ENCODE measurements at regions of chr1 and their contacts with region 1.

Region 1: DNA sequence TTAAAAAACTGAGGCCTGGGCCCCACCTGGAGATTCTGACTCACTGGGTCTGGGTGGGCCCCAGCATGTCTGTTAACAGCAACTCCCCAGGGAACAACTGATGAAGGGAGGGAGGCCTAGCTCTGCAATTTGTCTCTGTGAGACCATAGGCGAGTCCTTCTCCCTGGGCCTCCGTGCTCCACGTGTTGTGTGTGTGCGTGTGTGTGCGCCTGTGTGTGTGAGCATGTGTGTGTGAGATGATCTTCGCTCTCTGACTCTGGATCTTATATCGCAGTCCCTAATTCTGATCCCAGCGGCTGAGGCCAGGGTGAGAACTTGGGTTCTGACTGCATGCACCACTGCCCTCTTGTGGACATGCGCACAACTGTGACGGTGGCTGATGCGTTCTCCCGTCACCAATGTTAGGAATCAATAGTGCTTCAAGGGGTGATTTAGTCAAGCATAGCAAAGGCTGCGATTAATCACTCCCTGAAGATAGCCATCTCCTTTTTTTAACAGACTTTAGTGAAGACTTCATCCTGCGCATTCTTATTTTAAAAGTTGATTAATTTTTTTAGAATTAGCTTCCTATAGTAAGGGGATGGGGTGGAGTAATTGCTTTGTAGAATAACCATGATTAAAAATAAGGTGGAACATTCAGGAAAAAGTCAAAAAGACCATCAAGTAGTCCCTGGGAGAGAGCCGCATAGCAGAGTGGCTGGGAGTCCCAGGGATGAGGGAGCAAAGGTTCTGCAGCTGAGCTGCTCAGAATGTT is 62.4 kb upstream of the USP24 start:
- DNase-seq: peak; percentile 59
- ATAC-seq: peak; percentile 98
- H3K4me3 ChIP-seq: no peak overlapping the region
- H3K27ac ChIP-seq: no peak overlapping the region
- H3K4me1 ChIP-seq: peaks cover 9% of the 10 kb centered on the region; the same call in 1 of the 2 replicates
- H3K27me3 ChIP-seq: no peaks in the 10 kb centered on the region
- CTCF ChIP-seq: peak; percentile 67 to 84 (median 82)
- EP300 ChIP-seq: no peak
- POLR2A ChIP-seq: no peak
- RAD21 ChIP-seq: peak; percentile 77

Region 2: DNA sequence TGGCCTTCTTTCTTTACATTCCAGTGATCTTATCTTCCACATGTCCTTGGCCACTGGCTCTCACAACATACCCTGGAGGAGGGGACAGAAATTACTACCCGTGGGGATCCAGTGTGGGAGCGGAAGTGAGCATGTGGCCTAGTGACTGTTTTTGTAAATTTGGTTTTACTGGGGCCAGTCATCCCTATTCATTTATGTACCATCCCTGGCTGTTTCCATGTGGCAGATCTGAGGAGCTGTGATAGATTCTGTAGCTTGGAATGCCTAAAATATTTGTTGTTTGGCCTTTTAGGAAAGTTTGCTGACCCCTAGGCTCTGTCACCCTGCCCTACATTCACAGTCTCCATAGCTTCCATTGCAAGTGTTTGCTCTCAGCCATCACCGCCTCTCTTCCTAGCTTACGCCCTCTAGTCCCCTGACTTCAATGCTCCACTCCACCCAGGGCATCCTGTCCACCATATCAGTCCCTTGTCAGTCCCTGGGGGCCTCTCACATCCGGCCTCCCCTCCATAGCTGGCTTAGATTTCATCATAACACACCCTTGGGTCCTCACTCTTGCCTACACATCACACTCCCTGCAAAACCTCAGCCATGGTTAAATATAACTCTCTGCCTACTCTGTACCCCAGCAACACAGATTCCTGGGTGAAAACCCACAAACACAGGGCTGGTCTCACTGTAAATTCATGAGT is 416.3 kb before region 1 on chr1:
- CTCF ChIA-PET with region 1: no interaction called
- POLR2A ChIA-PET with region 1: no interaction called
- RAD21 ChIA-PET with region 1: no interaction called
- SMC1A ChIA-PET with region 1: no interaction called
- in situ Hi-C with region 1: no loop called
- intact Hi-C with region 1: no loop called
- DNase-seq: peak; percentile 35
- ATAC-seq: peak; percentile 85
- H3K4me3 ChIP-seq: no peak overlapping the region
- H3K27ac ChIP-seq: peak overlapping the region; percentile 24; the same call in 1 of the 2 replicates
- H3K4me1 ChIP-seq: peaks cover 9% of the 10 kb centered on the region
- H3K27me3 ChIP-seq: no peaks in the 10 kb centered on the region
- CTCF ChIP-seq: no peak
- EP300 ChIP-seq: no peak
- POLR2A ChIP-seq: no peak
- RAD21 ChIP-seq: no peak

Region 3: DNA sequence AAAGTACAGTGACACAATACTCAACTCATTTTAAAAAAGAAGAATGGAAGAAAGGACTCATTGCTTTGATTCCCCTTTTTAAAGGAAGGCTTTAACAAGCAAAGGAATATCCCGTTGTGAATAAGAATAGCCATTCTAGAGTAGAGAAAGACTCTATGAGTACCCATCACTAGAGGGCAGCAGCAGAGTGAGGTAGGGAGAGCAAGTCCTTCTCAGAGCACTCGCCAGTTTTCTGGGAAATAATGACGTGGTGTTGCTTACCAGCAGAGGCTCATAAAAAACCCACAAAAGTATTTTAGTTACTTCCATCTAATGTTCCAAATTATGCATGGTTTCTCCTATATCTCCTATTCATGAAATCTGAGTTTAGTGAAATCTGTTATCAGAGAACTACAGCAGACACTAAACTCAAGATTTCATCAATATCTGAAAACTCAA is 137.0 kb before region 1 on chr1:
- CTCF ChIA-PET with region 1: interaction called, 230 read pairs
- POLR2A ChIA-PET with region 1: interaction called, 6 read pairs
- RAD21 ChIA-PET with region 1: interaction called, 25 read pairs
- SMC1A ChIA-PET with region 1: interaction called, 47 read pairs
- in situ Hi-C with region 1: loop called (anchors 5 kb)
- intact Hi-C with region 1: loop called (anchors 1 kb)
- DNase-seq: peak; percentile 11
- ATAC-seq: peak; percentile 97
- H3K4me3 ChIP-seq: no peak overlapping the region
- H3K27ac ChIP-seq: no peak overlapping the region
- H3K4me1 ChIP-seq: no peaks in the 10 kb centered on the region
- H3K27me3 ChIP-seq: no peaks in the 10 kb centered on the region
- CTCF ChIP-seq: peak; percentile 70 to 84 (median 75)
- EP300 ChIP-seq: no peak
- POLR2A ChIP-seq: no peak
- RAD21 ChIP-seq: peak; percentile 94

Region 4: GRCh38 chr1:55155514-55155913 is 122.0 kb before region 1 on chr1:
- CTCF ChIA-PET with region 1: interaction called, 10 read pairs
- POLR2A ChIA-PET with region 1: no interaction called
- RAD21 ChIA-PET with region 1: interaction called, 5 read pairs
- SMC1A ChIA-PET with region 1: interaction called, 6 read pairs
- in situ Hi-C with region 1: no loop called
- intact Hi-C with region 1: no loop called
- DNase-seq: no peak
- ATAC-seq: no peak
- H3K4me3 ChIP-seq: no peak overlapping the region
- H3K27ac ChIP-seq: no peak overlapping the region
- H3K4me1 ChIP-seq: peaks cover 13% of the 10 kb centered on the region; the same call in 1 of the 2 replicates
- H3K27me3 ChIP-seq: no peaks in the 10 kb centered on the region
- CTCF ChIP-seq: no peak
- EP300 ChIP-seq: no peak
- POLR2A ChIP-seq: no peak
- RAD21 ChIP-seq: no peak

Region 5: GRCh38 chr1:55204997-55205396 is 72.6 kb before region 1 on chr1:
- CTCF ChIA-PET with region 1: interaction called, 12 read pairs
- POLR2A ChIA-PET with region 1: no interaction called
- RAD21 ChIA-PET with region 1: interaction called, 7 read pairs
- SMC1A ChIA-PET with region 1: interaction called, 20 read pairs
- in situ Hi-C with region 1: no loop called
- intact Hi-C with region 1: no loop called
- DNase-seq: no peak
- ATAC-seq: peak; percentile 85
- H3K4me3 ChIP-seq: no peak overlapping the region
- H3K27ac ChIP-seq: 0 out of 2 replicates have a peak overlapping the region, but pooled peaks have one; percentile 26
- H3K4me1 ChIP-seq: peaks cover 24% of the 10 kb centered on the region
- H3K27me3 ChIP-seq: no peaks in the 10 kb centered on the region
- CTCF ChIP-seq: no peak
- EP300 ChIP-seq: no peak
- POLR2A ChIP-seq: no peak
- RAD21 ChIP-seq: no peak

Region 6: DNA sequence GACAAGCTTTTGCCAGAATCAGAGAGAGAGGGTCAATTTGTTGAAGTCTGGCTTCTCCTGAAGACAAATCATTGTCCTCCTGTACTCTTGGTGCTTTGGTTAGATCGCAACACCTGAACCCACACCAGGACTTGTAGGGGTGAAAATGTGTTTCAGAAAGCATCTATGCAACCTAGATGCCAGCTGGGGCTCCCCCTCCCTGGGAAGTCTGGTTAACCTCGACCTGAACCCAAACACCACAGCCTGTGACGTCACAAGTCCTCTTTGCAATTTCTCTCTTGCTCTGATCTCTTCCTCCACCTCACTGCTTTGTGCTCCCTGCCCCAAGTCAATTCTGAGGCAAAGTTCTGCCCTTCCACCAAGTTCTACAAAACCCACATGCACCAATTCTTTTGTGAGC is 19.6 kb before region 1 on chr1:
- CTCF ChIA-PET with region 1: interaction called, 29 read pairs
- POLR2A ChIA-PET with region 1: no interaction called
- RAD21 ChIA-PET with region 1: interaction called, 6 read pairs
- SMC1A ChIA-PET with region 1: interaction called, 13 read pairs
- in situ Hi-C with region 1: no loop called
- intact Hi-C with region 1: no loop called
- DNase-seq: peak; percentile 45
- ATAC-seq: peak; percentile 63
- H3K4me3 ChIP-seq: no peak overlapping the region
- H3K27ac ChIP-seq: peak overlapping the region; percentile 55
- H3K4me1 ChIP-seq: peaks cover 51% of the 10 kb centered on the region
- H3K27me3 ChIP-seq: no peaks in the 10 kb centered on the region
- CTCF ChIP-seq: no peak
- EP300 ChIP-seq: no peak
- POLR2A ChIP-seq: no peak
- RAD21 ChIP-seq: no peak